GM12878 (cell line): ENCODE measurements at regions of chr11 and their contacts with region 1.

Region 1: DNA sequence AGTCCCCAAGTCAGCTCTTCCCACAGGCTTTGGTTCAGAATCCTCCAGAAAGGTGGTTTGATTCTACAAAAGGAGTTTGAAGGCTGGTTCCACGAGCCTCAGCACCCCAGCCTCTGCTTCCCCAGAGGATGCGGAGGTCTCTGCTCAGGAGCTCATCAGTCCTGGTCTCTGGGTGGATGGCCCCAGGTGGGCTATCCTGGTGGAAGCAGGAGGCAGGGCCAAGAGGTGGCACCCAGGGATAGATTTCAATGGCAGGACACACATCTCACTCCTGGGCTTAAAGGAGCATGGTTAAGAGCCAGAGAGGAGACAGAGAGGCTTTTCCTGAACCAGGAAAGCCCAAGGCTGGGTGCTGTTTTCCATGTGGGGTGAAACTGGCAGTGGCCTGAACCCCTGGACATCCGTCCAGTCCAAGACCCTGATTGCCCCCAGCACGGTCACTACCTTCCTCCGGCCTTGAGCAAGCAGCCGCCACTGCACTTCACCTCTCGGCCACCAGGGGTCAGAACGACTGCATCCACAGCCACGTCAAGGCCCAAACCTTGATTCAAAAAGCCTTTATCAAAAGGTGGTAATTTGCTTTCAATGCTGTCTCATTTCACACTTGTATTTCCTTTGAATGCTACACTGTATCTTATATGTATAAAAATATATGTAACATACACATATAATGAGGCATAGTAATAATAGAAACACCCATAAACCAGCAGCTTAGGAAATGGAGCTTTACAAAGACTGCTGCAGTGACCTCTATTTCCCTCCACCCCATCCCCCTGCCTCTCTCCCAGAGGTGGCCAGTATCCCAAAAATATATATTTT is 19.3 kb upstream of the FXYD2 start:
- DNase-seq: no peak
- ATAC-seq: peak; percentile 89
- H3K4me3 ChIP-seq: no peak overlapping the region
- H3K27ac ChIP-seq: no peak overlapping the region
- H3K4me1 ChIP-seq: no peaks in the 10 kb centered on the region; the same call in 1 of the 2 replicates
- H3K27me3 ChIP-seq: no peaks in the 10 kb centered on the region
- CTCF ChIP-seq: peak; percentile 94 to 98 (median 97)
- EP300 ChIP-seq: no peak
- POLR2A ChIP-seq: no peak
- RAD21 ChIP-seq: peak; percentile 87

Region 2: DNA sequence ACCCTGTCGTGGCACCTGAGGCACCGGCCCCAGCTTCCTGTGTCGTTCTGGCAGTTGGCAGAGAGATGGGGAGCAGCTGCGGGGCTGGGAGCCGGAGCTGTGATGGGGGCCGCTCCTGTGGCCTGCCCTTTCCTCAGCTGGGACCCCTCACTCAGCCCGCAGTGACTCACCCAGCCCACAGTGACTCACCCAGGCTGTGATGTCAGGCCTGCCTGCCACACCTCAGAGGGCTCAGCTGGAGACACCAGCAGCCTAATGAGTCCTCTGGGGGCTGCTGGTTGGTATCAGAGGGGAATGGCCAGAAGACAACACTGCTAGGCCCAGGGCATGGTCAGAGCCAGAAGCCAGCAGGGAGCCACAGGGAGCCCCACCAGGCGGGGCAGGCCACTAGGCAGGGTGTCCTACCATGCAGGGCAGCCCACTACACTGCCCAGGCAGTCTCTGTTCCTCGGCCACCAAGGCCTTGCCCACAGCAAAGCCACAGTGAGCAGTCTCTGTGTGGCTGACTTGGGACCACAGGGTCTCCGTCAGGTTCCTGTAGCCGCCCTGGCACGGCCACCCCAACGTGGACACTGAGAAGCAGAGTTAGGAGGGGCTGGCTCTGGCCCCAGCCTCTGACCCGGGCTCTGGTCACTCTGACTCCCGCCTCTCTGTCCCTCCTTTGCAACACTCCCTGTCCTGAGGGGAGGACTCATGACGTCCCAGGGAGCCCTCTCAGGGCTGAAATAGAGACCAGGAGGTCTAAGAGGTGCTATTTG is 15.1 kb before region 1 on chr11:
- CTCF ChIA-PET with region 1: interaction called, 34 read pairs
- POLR2A ChIA-PET with region 1: interaction called, 3 read pairs
- RAD21 ChIA-PET with region 1: interaction called, 17 read pairs
- SMC1A ChIA-PET with region 1: interaction called, 11 read pairs
- in situ Hi-C with region 1: no loop called
- intact Hi-C with region 1: loop called (anchors 1 kb)
- DNase-seq: no peak
- ATAC-seq: peak; percentile 92
- H3K4me3 ChIP-seq: no peak overlapping the region
- H3K27ac ChIP-seq: no peak overlapping the region; the same call in 1 of the 2 replicates
- H3K4me1 ChIP-seq: peaks cover 14% of the 10 kb centered on the region
- H3K27me3 ChIP-seq: no peaks in the 10 kb centered on the region
- CTCF ChIP-seq: no peak
- EP300 ChIP-seq: peak; percentile 34 to 54; a peak in 2 of 4 replicates
- POLR2A ChIP-seq: 0 out of 2 replicates have a peak, but pooled peaks have one; percentile 19
- RAD21 ChIP-seq: no peak

Region 3: DNA sequence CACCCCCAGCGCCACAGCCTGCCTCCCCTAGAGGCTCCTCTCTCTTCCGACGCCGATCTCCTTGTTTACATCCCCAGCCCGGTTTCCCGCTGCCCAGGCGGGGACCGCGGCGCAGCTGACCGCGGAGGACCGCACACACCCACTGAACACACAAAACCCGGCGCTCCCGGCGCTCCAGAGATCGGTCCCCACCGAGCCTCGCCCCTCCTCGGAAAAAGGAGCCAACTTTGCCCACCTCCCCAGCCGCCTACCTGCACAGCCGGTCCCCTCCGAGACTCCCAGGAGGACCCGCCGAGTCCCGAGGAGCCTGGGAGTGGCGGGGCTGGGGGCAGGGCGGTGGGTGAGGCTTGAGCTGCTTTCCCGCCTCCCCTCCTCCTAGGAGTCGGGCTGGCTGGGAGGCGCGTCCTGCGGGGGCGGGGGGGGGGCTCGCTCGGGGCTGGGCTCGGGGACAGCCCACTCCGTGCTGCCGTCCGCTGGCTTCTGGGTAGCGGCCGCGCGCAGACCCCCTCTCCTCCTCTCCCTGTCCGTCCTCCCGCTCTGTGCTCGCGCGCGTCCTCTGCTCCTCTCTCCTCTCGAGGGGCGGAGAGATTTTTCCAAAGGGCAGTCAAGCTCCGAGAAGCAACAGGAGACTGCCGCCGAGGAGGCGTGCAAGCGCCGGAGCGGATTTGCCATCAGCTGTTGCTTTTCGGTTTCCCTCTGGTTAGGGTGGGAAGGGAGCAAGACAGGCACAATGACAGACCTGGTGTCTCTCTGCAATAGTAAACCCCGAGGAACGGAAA is 32.7 kb after region 1 on chr11 and contains the start of gene FXYD6:
- CTCF ChIA-PET with region 1: no interaction called
- POLR2A ChIA-PET with region 1: no interaction called
- RAD21 ChIA-PET with region 1: no interaction called
- SMC1A ChIA-PET with region 1: no interaction called
- in situ Hi-C with region 1: no loop called
- intact Hi-C with region 1: no loop called
- DNase-seq: no peak
- ATAC-seq: no peak
- H3K4me3 ChIP-seq: no peak within 1 kb of the TSS
- H3K27ac ChIP-seq: no peak within 1 kb of the TSS
- H3K4me1 ChIP-seq: no peaks in the 10 kb centered on the region
- H3K27me3 ChIP-seq: peaks cover 18% of the 10 kb centered on the region in 2 experiments
- CTCF ChIP-seq: no peak
- EP300 ChIP-seq: no peak
- POLR2A ChIP-seq: no peak
- RAD21 ChIP-seq: no peak
- polyA plus RNA-seq, gene FXYD6: 0.16 to 0.29 TPM

Region 4: GRCh38 chr11:117941163-117941707 is 97.4 kb after region 1 on chr11:
- CTCF ChIA-PET with region 1: interaction called, 238 read pairs
- POLR2A ChIA-PET with region 1: interaction called, 4 read pairs
- RAD21 ChIA-PET with region 1: interaction called, 135 read pairs
- SMC1A ChIA-PET with region 1: interaction called, 163 read pairs
- in situ Hi-C with region 1: loop called (anchors 5 kb)
- intact Hi-C with region 1: no loop called
- DNase-seq: no peak
- ATAC-seq: no peak
- H3K4me3 ChIP-seq: no peak overlapping the region
- H3K27ac ChIP-seq: no peak overlapping the region
- H3K4me1 ChIP-seq: peaks cover 24% of the 10 kb centered on the region
- H3K27me3 ChIP-seq: no peaks in the 10 kb centered on the region
- CTCF ChIP-seq: no peak
- EP300 ChIP-seq: no peak
- POLR2A ChIP-seq: no peak
- RAD21 ChIP-seq: no peak

Region 5: GRCh38 chr11:117985953-117986887 is 142.3 kb after region 1 on chr11 and contains the start of gene IL10RA:
- CTCF ChIA-PET with region 1: interaction called, 3 read pairs
- POLR2A ChIA-PET with region 1: no interaction called
- RAD21 ChIA-PET with region 1: interaction called, 13 read pairs
- SMC1A ChIA-PET with region 1: no interaction called
- in situ Hi-C with region 1: no loop called
- intact Hi-C with region 1: no loop called
- DNase-seq: no peak
- ATAC-seq: peak; percentile 87
- H3K4me3 ChIP-seq: peak within 1 kb of the TSS; percentile 79
- H3K27ac ChIP-seq: peak within 1 kb of the TSS; percentile 84
- H3K4me1 ChIP-seq: peaks cover 18% of the 10 kb centered on the region
- H3K27me3 ChIP-seq: no peaks in the 10 kb centered on the region
- CTCF ChIP-seq: peak in 2 of 3 experiments; percentile 10 to 15; a peak in 1 of 6 replicates
- EP300 ChIP-seq: 0 out of 4 replicates have a peak, but pooled peaks of 1 of the 2 experiments have one; percentile 26
- POLR2A ChIP-seq: peak; percentile 99
- RAD21 ChIP-seq: no peak
- polyA plus RNA-seq, gene IL10RA: 0.77 to 1.4 TPM

Region 6: DNA sequence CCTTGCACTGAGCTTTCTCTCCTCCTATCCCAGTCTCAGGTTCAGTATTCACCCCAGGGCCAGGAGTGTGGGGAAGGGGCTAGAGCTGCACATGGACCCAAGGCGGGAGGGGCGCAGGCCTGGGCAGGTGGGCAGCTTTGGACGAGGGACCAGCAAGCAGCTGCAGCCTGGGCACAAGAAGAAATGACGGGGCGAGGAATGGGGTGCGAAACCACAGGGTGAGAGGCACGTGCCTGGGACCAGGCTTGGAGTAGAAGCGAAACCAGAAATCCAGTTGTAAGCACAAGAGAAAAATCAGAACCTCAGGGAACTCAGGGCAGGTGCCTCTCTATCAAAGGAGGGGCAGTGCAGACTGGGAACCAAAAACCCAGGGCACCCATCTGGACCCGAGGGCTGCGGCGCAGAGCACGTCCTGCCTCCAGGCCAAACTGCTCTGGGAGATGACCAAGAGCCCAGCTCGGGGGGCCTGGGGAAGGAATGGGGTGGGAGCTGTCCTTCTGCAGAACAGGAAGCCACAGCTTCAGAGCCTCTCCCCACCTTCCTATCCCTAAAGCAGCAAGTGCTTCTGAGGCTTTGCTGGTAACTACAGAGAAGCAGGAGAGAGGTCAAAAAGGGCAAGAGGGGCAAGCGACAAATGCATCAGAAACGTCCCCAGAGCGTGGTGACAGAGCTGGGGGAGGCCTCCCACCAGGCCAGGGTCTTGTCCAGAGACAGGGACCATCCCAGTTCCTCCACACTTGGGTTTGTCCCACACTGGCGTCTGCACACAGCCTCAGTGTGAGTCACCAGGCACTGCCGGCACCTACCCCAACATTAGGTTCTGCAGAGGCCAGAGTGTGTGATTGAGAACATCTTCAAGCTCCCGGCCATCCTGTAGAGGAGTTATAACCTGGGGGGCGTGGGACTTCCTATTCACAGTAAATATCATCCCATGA is 214.7 kb after region 1 on chr11:
- CTCF ChIA-PET with region 1: interaction called, 127 read pairs
- POLR2A ChIA-PET with region 1: interaction called, 3 read pairs
- RAD21 ChIA-PET with region 1: interaction called, 93 read pairs
- SMC1A ChIA-PET with region 1: interaction called, 95 read pairs
- in situ Hi-C with region 1: loop called (anchors 5 kb)
- intact Hi-C with region 1: loop called (anchors 1 kb)
- DNase-seq: no peak
- ATAC-seq: peak; percentile 31; the same call in 1 of the 3 replicates
- H3K4me3 ChIP-seq: no peak overlapping the region
- H3K27ac ChIP-seq: no peak overlapping the region
- H3K4me1 ChIP-seq: no peaks in the 10 kb centered on the region
- H3K27me3 ChIP-seq: peaks cover 1 to 3% of the 10 kb centered on the region in 2 experiments; a peak in 3 of 4 replicates
- CTCF ChIP-seq: no peak
- EP300 ChIP-seq: no peak
- POLR2A ChIP-seq: no peak
- RAD21 ChIP-seq: no peak